ENCODE measurements at regions of chr2 and their contacts with region 1.

Region 1: DNA sequence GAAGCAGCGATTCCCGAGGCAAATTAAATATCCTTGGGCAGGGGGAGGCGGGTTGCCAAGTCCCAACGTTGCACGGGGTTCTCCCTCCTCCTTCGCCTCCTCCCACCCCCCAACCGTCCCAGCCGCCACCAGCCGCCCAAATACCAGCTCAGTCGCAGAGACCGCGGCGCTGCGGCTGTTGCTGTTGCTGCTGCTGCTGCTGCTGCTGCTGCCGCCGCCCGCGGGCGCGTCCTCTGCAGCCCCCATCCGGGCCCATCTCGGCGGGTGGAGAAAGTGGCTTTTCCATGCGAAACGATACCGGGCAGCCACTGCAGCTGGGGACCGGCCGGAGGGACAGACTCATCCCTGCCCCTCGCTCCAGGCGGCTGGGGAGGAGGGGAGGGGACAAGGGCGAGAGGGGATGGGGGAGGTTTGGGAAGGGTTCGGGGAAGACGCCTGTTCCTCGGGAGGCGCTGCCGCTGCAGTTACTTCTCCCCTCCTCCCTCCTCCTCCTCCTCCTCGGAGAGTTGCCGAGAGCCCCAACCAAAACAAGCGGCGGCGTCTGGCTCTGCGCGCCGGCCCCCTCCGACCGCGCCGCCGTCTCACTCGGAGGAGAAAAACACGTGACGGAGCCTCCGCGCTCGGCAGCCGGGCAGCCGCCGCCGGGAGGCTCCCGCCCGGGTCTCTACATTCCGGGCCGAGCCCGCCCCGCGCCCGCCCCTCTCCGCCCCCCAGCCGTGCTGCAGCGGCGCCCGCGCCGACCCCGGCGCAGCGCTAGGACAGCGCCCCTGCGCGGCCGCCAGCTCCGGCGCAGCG is at the start of gene IRS1:
- DNase-seq: peak; percentile 32 to 84 (median 68)
- ATAC-seq: peak; percentile 65
- H3K4me3 ChIP-seq: peak within 1 kb of the TSS; percentile 70 to 90
- H3K4me3 Mint-ChIP-seq: peak within 1 kb of the TSS; percentile 92
- H3K27ac ChIP-seq: peak within 1 kb of the TSS; percentile 43 to 51
- H3K27ac Mint-ChIP-seq: peak within 1 kb of the TSS; percentile 53
- H3K4me1 ChIP-seq: peaks cover 26% of the 10 kb centered on the region
- H3K4me1 Mint-ChIP-seq: peaks cover 39% of the 10 kb centered on the region
- H3K27me3 ChIP-seq: peaks cover 0 to 4% of the 10 kb centered on the region in 2 experiments
- H3K27me3 Mint-ChIP-seq: peaks cover 2% of the 10 kb centered on the region
- CTCF ChIP-seq: peak; percentile 17
- total RNA-seq, gene IRS1: 5.6 to 5.9 TPM

Region 2: GRCh38 chr2:225282858-225283710 is 1516.3 kb before region 1 on chr2:
- CTCF ChIA-PET with region 1: no interaction called
- POLR2A ChIA-PET with region 1: interaction called, 3 read pairs
- intact Hi-C with region 1: loop called in 1 of 2 experiments (anchors 5 kb)
- DNase-seq: peak in 4 of 9 experiments; percentile 15 to 50 (median 26)
- ATAC-seq: no peak
- H3K4me3 ChIP-seq: no peak overlapping the region
- H3K4me3 Mint-ChIP-seq: no peak overlapping the region
- H3K27ac ChIP-seq: no peak overlapping the region
- H3K27ac Mint-ChIP-seq: no peak overlapping the region
- H3K4me1 ChIP-seq: no peaks in the 10 kb centered on the region
- H3K4me1 Mint-ChIP-seq: no peaks in the 10 kb centered on the region
- H3K27me3 ChIP-seq: no peaks in the 10 kb centered on the region
- H3K27me3 Mint-ChIP-seq: no peaks in the 10 kb centered on the region
- CTCF ChIP-seq: peak; percentile 66

Region 3: GRCh38 chr2:226215902-226216503 is 583.4 kb before region 1 on chr2:
- CTCF ChIA-PET with region 1: interaction called, 29 read pairs
- POLR2A ChIA-PET with region 1: no interaction called
- intact Hi-C with region 1: loop called in 1 of 2 experiments (anchors 2 kb)
- DNase-seq: peak; percentile 22 to 62 (median 47)
- ATAC-seq: peak; percentile 62
- H3K4me3 ChIP-seq: no peak overlapping the region
- H3K4me3 Mint-ChIP-seq: no peak overlapping the region
- H3K27ac ChIP-seq: no peak overlapping the region
- H3K27ac Mint-ChIP-seq: no peak overlapping the region
- H3K4me1 ChIP-seq: no peaks in the 10 kb centered on the region
- H3K4me1 Mint-ChIP-seq: no peaks in the 10 kb centered on the region
- H3K27me3 ChIP-seq: no peaks in the 10 kb centered on the region
- H3K27me3 Mint-ChIP-seq: peaks cover 3% of the 10 kb centered on the region
- CTCF ChIP-seq: peak; percentile 53

Region 4: DNA sequence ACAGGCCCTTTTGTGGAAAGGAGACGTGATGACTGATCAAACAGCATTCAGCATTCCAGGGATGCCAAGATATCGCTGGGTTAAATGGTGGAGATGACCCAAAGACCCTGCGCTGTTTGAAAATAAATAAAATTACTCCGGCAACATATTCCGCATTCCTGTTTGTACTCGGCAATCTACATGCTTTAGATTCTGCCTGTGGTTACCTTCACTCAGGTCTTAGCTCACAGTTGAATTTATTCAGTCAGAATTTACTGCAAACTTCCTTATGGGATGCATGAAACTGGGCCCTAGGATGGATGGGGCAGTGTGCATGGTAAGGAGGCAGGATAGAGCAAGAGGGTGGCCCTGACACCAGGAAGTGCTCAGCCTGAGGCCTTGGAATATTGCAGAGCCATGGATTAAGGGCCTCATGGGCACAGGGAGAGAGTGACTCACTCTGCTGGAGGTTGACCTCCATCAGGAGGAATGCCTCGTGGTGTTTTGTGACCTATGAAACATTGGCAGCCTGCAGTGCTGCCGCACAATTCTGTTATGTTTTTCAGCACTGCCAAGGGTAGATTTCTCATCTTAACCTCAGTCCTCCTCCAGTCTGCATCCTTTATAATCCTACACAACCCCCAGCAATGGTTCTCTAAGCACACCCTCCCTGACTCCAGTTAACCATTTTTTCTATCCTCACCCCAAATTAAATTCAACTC is 321.1 kb before region 1 on chr2:
- CTCF ChIA-PET with region 1: no interaction called
- POLR2A ChIA-PET with region 1: no interaction called
- intact Hi-C with region 1: no loop called
- DNase-seq: no peak
- ATAC-seq: no peak
- H3K4me3 ChIP-seq: no peak overlapping the region
- H3K4me3 Mint-ChIP-seq: no peak overlapping the region
- H3K27ac ChIP-seq: no peak overlapping the region
- H3K27ac Mint-ChIP-seq: no peak overlapping the region
- H3K4me1 ChIP-seq: no peaks in the 10 kb centered on the region
- H3K4me1 Mint-ChIP-seq: no peaks in the 10 kb centered on the region
- H3K27me3 ChIP-seq: no peaks in the 10 kb centered on the region
- H3K27me3 Mint-ChIP-seq: peaks cover 10% of the 10 kb centered on the region
- CTCF ChIP-seq: no peak

Region 5: GRCh38 chr2:226625946-226626345 is 173.4 kb before region 1 on chr2:
- CTCF ChIA-PET with region 1: no interaction called
- POLR2A ChIA-PET with region 1: no interaction called
- intact Hi-C with region 1: loop called in 1 of 2 experiments (anchors 5 kb)
- DNase-seq: no peak
- ATAC-seq: no peak
- H3K4me3 ChIP-seq: no peak overlapping the region
- H3K4me3 Mint-ChIP-seq: no peak overlapping the region
- H3K27ac ChIP-seq: no peak overlapping the region
- H3K27ac Mint-ChIP-seq: no peak overlapping the region
- H3K4me1 ChIP-seq: no peaks in the 10 kb centered on the region
- H3K4me1 Mint-ChIP-seq: no peaks in the 10 kb centered on the region
- H3K27me3 ChIP-seq: no peaks in the 10 kb centered on the region
- H3K27me3 Mint-ChIP-seq: peaks cover 3% of the 10 kb centered on the region
- CTCF ChIP-seq: no peak

Region 6: DNA sequence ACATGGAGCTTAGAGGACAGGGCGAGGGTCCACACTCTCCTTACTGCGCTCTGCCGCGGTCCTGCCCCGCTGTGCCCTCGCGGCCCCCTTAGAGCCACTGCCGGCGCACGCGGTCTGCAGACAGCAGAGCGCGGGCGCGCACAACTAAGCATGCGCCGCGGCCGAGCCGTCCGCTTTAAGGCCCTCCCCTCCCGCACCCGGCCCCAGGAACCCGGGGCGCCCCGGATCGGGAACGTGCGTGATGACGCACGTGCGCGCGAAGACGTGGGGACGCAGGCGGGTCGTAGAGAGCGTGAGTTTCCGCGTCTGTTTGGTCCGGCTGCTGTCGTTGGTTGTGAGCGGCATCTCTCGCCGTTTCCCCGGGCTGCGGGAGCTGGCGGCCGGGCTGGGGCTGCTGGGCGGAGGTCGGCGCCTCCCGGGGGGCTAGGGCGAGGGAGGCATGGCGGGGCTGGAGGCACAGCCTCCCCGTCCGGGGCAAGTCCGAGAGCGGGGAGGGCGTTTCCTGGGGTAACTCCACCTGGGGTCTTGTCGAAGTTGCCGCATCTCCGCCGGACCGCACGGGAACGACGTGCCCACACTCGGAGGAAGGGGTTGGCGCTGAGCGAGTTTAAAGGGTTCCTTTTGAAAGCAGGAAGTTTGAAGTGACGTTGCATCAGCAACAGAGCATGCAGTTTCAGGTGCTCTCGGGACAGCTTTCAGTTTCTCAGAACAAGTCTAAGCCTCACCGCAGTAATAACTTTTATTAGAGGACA is 36.6 kb after region 1 on chr2 and contains the start of gene RHBDD1:
- CTCF ChIA-PET with region 1: interaction called, 20 read pairs
- POLR2A ChIA-PET with region 1: interaction called, 66 read pairs
- intact Hi-C with region 1: loop called (anchors 1 to 2 kb)
- DNase-seq: peak; percentile 88 to 98 (median 94)
- ATAC-seq: peak; percentile 82
- H3K4me3 ChIP-seq: peak within 1 kb of the TSS; percentile 64 to 74
- H3K4me3 Mint-ChIP-seq: peak within 1 kb of the TSS; percentile 90
- H3K27ac ChIP-seq: peak within 1 kb of the TSS; percentile 94 to 97
- H3K27ac Mint-ChIP-seq: peak within 1 kb of the TSS; percentile 98
- H3K4me1 ChIP-seq: peaks cover 51% of the 10 kb centered on the region
- H3K4me1 Mint-ChIP-seq: peaks cover 61% of the 10 kb centered on the region
- H3K27me3 ChIP-seq: no peaks in the 10 kb centered on the region
- H3K27me3 Mint-ChIP-seq: no peaks in the 10 kb centered on the region
- CTCF ChIP-seq: no peak
- total RNA-seq, gene RHBDD1: 29.7 to 30.9 TPM

Region 7: DNA sequence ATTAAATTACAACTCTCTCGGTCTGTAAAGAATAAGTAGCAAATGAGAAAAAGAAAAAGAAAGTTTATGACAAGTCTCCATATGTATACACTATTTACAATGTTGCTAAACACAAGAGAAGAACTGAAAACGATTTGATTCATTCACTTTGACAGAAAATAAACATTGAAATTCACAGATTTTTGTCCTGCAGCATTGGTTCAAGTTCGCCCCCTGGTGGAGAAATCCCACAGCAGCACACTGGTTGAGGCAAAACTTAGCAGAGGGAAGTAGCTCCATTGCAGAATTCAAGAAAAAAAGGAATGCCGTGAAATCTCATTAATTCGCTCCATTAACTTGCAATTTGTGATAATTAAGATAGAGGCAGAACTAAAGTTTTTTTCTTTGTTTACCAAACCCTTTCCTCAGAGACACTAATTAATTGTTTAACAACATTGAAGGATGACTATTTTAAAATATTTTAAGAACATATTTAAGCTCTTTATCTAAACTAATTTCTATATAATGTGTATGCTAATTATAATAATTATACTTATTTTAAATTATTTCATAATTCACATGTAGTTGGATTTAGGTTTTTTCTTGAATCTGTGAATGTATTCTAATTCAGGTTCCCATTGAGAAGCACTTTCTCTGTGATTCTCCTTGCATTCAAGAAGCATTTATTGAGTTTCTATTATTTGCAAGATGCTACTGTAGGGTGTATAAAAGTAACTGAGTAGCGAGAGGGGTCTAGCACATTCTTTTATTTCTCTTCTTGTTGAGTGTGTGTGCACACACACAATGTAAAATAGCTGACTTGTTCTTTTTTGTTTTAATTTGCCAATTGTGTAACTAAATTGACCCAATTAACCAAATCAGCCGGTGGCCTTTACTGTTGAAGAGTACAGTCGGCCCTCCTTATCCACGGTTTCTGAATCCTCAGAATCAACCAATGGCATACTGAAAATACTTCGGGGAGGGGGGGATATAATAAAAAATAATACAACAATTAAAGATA is 439.2 kb after region 1 on chr2:
- CTCF ChIA-PET with region 1: interaction called, 4 read pairs
- POLR2A ChIA-PET with region 1: no interaction called
- intact Hi-C with region 1: loop called in 1 of 2 experiments (anchors 10 kb)
- DNase-seq: peak; percentile 7 to 70 (median 56)
- ATAC-seq: no peak
- H3K4me3 ChIP-seq: no peak overlapping the region
- H3K4me3 Mint-ChIP-seq: no peak overlapping the region
- H3K27ac ChIP-seq: no peak overlapping the region
- H3K27ac Mint-ChIP-seq: no peak overlapping the region
- H3K4me1 ChIP-seq: no peaks in the 10 kb centered on the region
- H3K4me1 Mint-ChIP-seq: no peaks in the 10 kb centered on the region
- H3K27me3 ChIP-seq: no peaks in the 10 kb centered on the region
- H3K27me3 Mint-ChIP-seq: peaks cover 11% of the 10 kb centered on the region
- CTCF ChIP-seq: peak; percentile 98

Measured in CD8-positive, alpha-beta T cell (primary cell).